ENCODE measurements at regions of chr2 and their contacts with region 1.

Region 1: GRCh38 chr2:225668606-225669266 is 269.2 kb downstream of the NYAP2 start:
- DNase-seq: peak; percentile 14 to 47 (median 20)
- ATAC-seq: peak; percentile 78
- H3K4me3 ChIP-seq: no peak overlapping the region
- H3K27ac ChIP-seq: no peak overlapping the region
- H3K4me1 ChIP-seq: no peaks in the 10 kb centered on the region
- H3K27me3 ChIP-seq: no peaks in the 10 kb centered on the region
- CTCF ChIP-seq: peak; percentile 33 to 57 (median 56); a peak in 4 of 6 replicates
- EP300 ChIP-seq: no peak
- POLR2A ChIP-seq: no peak
- RAD21 ChIP-seq: peak; percentile 13 to 64; a peak in 2 of 4 replicates

Region 2: GRCh38 chr2:225615527-225615926 is 53.2 kb before region 1 on chr2:
- CTCF ChIA-PET with region 1: no interaction called
- POLR2A ChIA-PET with region 1: no interaction called
- in situ Hi-C with region 1: no loop called
- intact Hi-C with region 1: no loop called
- DNase-seq: no peak
- ATAC-seq: no peak
- H3K4me3 ChIP-seq: no peak overlapping the region
- H3K27ac ChIP-seq: no peak overlapping the region
- H3K4me1 ChIP-seq: no peaks in the 10 kb centered on the region
- H3K27me3 ChIP-seq: no peaks in the 10 kb centered on the region
- CTCF ChIP-seq: no peak
- EP300 ChIP-seq: no peak
- POLR2A ChIP-seq: no peak
- RAD21 ChIP-seq: no peak

Region 3: GRCh38 chr2:226800941-226801784 is 1132.4 kb after region 1 on chr2:
- CTCF ChIA-PET with region 1: interaction called, 5 read pairs
- POLR2A ChIA-PET with region 1: no interaction called
- in situ Hi-C with region 1: loop called (anchors 25 kb)
- intact Hi-C with region 1: loop called (anchors 2 kb)
- DNase-seq: peak in 1 of 4 experiments; percentile 15
- ATAC-seq: no peak
- H3K4me3 ChIP-seq: no peak overlapping the region
- H3K27ac ChIP-seq: no peak overlapping the region
- H3K4me1 ChIP-seq: peaks cover 0 to 18% of the 10 kb centered on the region in 2 experiments; a peak in 2 of 5 replicates
- H3K27me3 ChIP-seq: no peaks in the 10 kb centered on the region; a peak in 1 of 5 replicates
- CTCF ChIP-seq: no peak
- EP300 ChIP-seq: no peak
- POLR2A ChIP-seq: no peak
- RAD21 ChIP-seq: no peak

Region 4: GRCh38 chr2:226984750-226985582 is 1316.2 kb after region 1 on chr2:
- CTCF ChIA-PET with region 1: interaction called, 3 read pairs
- POLR2A ChIA-PET with region 1: no interaction called
- in situ Hi-C with region 1: no loop called
- intact Hi-C with region 1: loop called (anchors 5 kb)
- DNase-seq: peak; percentile 17 to 65 (median 31)
- ATAC-seq: peak; percentile 90
- H3K4me3 ChIP-seq: no peak overlapping the region
- H3K27ac ChIP-seq: peak overlapping the region; percentile 41; the same call in 2 of the 3 replicates
- H3K4me1 ChIP-seq: peaks cover 0 to 21% of the 10 kb centered on the region in 2 experiments; a peak in 3 of 5 replicates
- H3K27me3 ChIP-seq: no peaks in the 10 kb centered on the region
- CTCF ChIP-seq: peak; percentile 42 to 70 (median 50); a peak in 4 of 6 replicates
- EP300 ChIP-seq: no peak
- POLR2A ChIP-seq: no peak
- RAD21 ChIP-seq: peak; percentile 64 to 71

Region 5: DNA sequence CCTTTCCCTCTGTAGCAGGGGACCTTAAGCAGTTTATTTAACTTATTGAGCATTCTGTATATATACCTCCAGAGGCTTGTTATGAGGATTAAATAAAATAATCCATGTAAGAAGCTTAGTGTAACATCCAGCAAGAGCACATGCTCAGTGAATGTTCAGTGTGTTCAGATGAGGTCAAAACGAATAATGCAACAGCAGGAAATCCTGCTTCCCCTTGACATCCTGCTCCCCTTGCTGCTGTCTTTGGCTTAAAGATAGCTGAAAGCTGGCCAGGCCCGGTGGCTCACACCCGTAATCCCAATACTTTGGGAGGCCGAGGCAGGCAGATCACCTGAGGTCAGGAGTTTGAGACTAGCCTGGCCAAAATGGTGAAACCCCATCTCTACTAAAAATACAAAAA is 1426.6 kb after region 1 on chr2:
- CTCF ChIA-PET with region 1: no interaction called
- POLR2A ChIA-PET with region 1: no interaction called
- in situ Hi-C with region 1: loop called (anchors 5 kb)
- intact Hi-C with region 1: no loop called
- DNase-seq: no peak
- ATAC-seq: no peak
- H3K4me3 ChIP-seq: no peak overlapping the region
- H3K27ac ChIP-seq: no peak overlapping the region
- H3K4me1 ChIP-seq: no peaks in the 10 kb centered on the region
- H3K27me3 ChIP-seq: no peaks in the 10 kb centered on the region
- CTCF ChIP-seq: no peak
- EP300 ChIP-seq: no peak
- POLR2A ChIP-seq: no peak
- RAD21 ChIP-seq: no peak

Region 6: GRCh38 chr2:227106845-227107759 is 1438.4 kb after region 1 on chr2:
- CTCF ChIA-PET with region 1: interaction called, 7 read pairs
- POLR2A ChIA-PET with region 1: no interaction called
- in situ Hi-C with region 1: no loop called
- intact Hi-C with region 1: loop called (anchors 1 kb)
- DNase-seq: peak in 3 of 4 experiments; percentile 6 to 54 (median 15)
- ATAC-seq: peak; percentile 88
- H3K4me3 ChIP-seq: no peak overlapping the region
- H3K27ac ChIP-seq: no peak overlapping the region
- H3K4me1 ChIP-seq: no peaks in the 10 kb centered on the region
- H3K27me3 ChIP-seq: no peaks in the 10 kb centered on the region
- CTCF ChIP-seq: peak; percentile 64 to 74 (median 65)
- EP300 ChIP-seq: no peak
- POLR2A ChIP-seq: no peak
- RAD21 ChIP-seq: peak; percentile 61 to 82

Region 7: GRCh38 chr2:227238238-227239237 is 1569.8 kb after region 1 on chr2:
- CTCF ChIA-PET with region 1: interaction called, 3 read pairs
- POLR2A ChIA-PET with region 1: no interaction called
- in situ Hi-C with region 1: no loop called
- intact Hi-C with region 1: loop called (anchors 5 kb)
- DNase-seq: peak; percentile 39 to 55 (median 48)
- ATAC-seq: peak; percentile 75
- H3K4me3 ChIP-seq: no peak overlapping the region
- H3K27ac ChIP-seq: no peak overlapping the region
- H3K4me1 ChIP-seq: no peaks in the 10 kb centered on the region
- H3K27me3 ChIP-seq: no peaks in the 10 kb centered on the region
- CTCF ChIP-seq: peak; percentile 58 to 77 (median 77)
- EP300 ChIP-seq: no peak
- POLR2A ChIP-seq: no peak
- RAD21 ChIP-seq: peak; percentile 32 to 66

Measured in K562 (cell line).